Heart left ventricle (tissue), 16 donors: ENCODE measurements at regions of chr6 and their contacts with region 1.

Region 1: DNA sequence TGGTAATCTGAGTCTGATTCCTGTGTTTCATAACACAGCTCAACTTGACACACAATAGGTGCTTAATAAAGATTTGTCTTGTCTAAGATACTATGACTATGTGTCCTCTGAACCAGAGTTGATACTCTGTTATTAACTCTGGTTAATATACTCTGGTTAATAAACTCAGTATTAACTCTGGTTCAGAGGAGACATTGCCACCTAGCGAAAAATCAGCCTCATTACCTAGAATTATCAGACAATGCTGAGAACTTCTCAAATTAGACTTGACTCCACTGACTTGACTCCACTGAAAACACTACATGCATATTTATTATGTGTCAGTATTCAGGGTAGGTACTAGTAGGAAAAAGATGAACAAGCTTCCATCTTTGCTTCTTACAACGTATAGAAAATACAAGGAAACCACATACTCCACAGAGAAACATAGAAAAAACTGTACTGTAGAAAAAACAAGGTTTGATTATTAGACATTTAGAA is 73.9 kb downstream of the AHI1 start:
- DNase-seq: no peak
- ATAC-seq: peak in 3 of 4 donors; percentile 32 to 68 (median 53)
- H3K4me3 ChIP-seq: no peak overlapping the region
- H3K27ac ChIP-seq: no peak overlapping the region
- H3K4me1 ChIP-seq: no peaks in the 10 kb centered on the region
- H3K27me3 ChIP-seq: no peaks in the 10 kb centered on the region
- CTCF ChIP-seq: peak; percentile 42 to 66 (median 58)
- POLR2A ChIP-seq: no peak

Region 2: DNA sequence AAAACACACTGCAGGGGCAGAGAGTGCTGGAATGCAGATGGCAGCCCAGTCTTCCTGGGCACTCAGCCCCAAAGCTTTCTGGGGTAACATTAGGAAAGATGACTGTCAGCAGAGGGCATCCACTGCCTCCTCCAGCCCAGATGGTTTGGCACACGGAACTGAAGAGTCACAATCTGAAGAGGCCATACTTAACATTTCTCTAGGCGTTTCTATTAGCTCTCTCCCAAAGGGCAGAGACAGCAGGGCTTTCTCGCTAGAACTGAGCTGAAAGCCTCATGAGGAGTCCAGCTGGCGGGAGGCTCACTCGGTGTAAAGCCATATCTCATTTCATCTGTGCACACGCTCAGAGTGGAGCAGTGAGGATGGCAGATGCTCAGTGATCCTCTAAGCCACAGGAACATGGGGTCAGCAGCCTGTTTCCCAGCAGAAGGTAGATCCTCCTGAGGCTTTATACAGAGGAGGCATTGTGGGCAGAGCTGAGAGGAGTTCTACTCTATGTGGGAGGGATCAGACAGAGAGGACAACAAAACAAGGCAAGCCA is 501.9 kb before region 1 on chr6:
- intact Hi-C with region 1: no loop called
- DNase-seq: no peak
- ATAC-seq: peak in 2 of 4 donors; percentile 28 to 51
- H3K4me3 ChIP-seq: no peak overlapping the region
- H3K27ac ChIP-seq: no peak overlapping the region
- H3K4me1 ChIP-seq: no peaks in the 10 kb centered on the region
- H3K27me3 ChIP-seq: no peaks in the 10 kb centered on the region
- CTCF ChIP-seq: no peak
- POLR2A ChIP-seq: no peak

Region 3: GRCh38 chr6:135145063-135145800 is 278.5 kb before region 1 on chr6:
- intact Hi-C with region 1: loop called (anchors 2 to 10 kb)
- DNase-seq: no peak
- ATAC-seq: no peak
- H3K4me3 ChIP-seq: peak overlapping the region in 2 of 12 donors; percentile 1 to 42
- H3K27ac ChIP-seq: peak overlapping the region in 1 of 12 donors; percentile 23
- H3K4me1 ChIP-seq: peaks cover 0 to 13% (median 0%) of the 10 kb centered on the region in 12 donors
- H3K27me3 ChIP-seq: no peaks in the 10 kb centered on the region
- CTCF ChIP-seq: peak in 11 of 12 donors; percentile 21 to 57 (median 40)
- POLR2A ChIP-seq: no peak

Region 4: DNA sequence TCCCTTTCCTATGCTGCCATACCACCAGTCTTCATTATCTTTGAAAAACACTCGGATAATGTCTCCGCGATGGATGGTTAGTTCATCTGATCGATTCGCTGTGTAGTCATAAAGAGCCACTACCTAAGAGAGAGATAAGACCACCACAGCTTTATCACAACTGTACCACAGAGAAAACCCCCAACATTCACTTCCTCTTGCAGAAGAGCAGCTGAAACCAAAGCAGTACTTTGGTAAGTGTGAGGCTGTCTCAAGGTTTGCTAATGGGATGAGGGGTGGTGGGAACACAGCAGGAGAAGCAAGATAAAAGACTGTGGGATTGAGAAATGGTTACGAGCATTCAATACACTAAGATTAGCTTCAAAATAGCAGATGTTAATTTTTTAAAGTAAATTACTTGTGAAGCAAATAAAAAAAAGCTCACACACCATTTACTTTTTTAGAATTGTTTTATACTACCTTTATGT is 100.5 kb before region 1 on chr6:
- intact Hi-C with region 1: no loop called
- DNase-seq: no peak
- ATAC-seq: no peak
- H3K4me3 ChIP-seq: no peak overlapping the region
- H3K27ac ChIP-seq: no peak overlapping the region
- H3K4me1 ChIP-seq: no peaks in the 10 kb centered on the region
- H3K27me3 ChIP-seq: no peaks in the 10 kb centered on the region
- CTCF ChIP-seq: no peak
- POLR2A ChIP-seq: no peak

Region 5: DNA sequence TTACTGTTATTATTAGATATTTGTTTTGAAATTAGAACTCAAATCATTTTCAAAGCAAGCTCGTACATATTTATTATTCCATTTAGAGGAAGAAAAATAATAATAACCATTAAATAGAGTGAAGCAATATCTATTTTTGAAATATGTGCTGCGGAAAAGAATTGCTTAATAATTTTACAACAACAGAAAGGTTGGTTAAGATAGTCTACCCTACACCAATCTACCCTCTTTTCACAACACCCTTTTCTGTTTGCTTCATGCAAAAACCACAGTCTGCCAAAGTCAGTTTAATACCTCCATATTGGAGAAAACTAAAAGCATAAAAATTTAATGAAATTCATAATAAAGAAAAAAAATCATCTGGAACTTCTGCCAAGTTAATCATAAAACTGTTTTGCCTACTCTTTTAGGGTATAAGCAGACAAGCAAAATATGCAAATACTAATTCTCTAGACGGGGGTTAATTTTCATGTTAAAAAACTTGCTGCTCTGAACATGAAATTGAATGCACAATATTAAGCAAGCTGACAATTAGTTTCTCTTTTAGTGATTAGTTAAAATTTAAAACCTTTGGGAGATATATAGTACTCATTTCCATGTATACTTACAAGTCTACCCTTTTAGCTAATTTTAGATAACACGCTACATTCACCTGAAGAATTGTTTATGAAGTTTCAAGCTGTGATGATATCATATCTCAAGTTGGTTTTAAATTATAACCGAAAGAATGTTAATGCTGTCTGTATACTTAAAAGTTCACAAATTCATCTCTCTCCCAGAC is 26.3 kb before region 1 on chr6:
- intact Hi-C with region 1: no loop called
- DNase-seq: no peak
- ATAC-seq: no peak
- H3K4me3 ChIP-seq: no peak overlapping the region
- H3K27ac ChIP-seq: no peak overlapping the region
- H3K4me1 ChIP-seq: no peaks in the 10 kb centered on the region
- H3K27me3 ChIP-seq: no peaks in the 10 kb centered on the region
- CTCF ChIP-seq: no peak
- POLR2A ChIP-seq: no peak